GM12878 (cell line): ENCODE measurements at regions of chr7 and their contacts with region 1.

Region 1: DNA sequence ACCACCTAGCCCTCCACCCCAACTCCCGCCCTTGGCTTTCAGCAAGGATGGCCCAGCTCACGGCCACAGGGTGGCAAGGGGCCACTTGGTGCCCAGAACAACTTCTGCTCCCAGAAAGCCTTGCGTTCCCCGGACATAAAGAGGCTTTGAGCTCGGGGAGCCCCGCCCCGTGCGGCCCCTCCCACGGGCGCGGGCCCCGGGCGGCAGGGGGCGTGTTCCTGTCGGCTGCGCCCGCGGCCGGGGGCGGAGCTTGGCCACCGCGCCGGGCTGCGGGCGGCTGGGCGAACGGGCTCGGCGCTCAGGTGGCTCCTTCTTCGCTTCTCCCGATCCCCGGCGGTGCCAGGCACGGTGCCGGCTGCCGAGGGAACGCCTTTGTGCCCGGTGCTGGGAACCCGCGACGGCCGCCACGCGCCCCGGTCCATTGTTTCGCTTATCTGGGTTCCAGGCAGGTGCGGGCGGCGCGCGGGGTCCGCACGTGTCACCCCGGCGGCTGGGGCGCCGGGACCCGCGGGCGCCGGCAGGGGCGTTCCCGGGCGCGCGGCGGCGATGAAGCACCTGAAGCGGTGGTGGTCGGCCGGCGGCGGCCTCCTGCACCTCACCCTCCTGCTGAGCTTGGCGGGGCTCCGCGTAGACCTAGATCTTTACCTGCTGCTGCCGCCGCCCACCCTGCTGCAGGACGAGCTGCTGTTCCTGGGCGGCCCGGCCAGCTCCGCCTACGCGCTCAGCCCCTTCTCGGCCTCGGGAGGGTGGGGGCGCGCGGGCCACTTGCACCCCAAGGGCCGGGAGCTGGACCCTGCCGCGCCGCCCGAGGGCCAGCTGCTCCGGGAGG is at the start of gene NFE2L3:
- DNase-seq: no peak
- ATAC-seq: peak; percentile 75
- H3K4me3 ChIP-seq: peak within 1 kb of the TSS; percentile 72
- H3K27ac ChIP-seq: peak within 1 kb of the TSS; percentile 88
- H3K4me1 ChIP-seq: peaks cover 23% of the 10 kb centered on the region
- H3K27me3 ChIP-seq: no peaks in the 10 kb centered on the region
- CTCF ChIP-seq: peak; percentile 6 to 17 (median 9); a peak in 1 of 6 replicates
- EP300 ChIP-seq: no peak
- POLR2A ChIP-seq: peak; percentile 82
- RAD21 ChIP-seq: no peak
- polyA plus RNA-seq, gene NFE2L3: 4.9 to 8.9 TPM

Region 2: GRCh38 chr7:25951031-25951948 is 200.9 kb before region 1 on chr7:
- CTCF ChIA-PET with region 1: no interaction called
- POLR2A ChIA-PET with region 1: interaction called, 4 read pairs
- RAD21 ChIA-PET with region 1: no interaction called
- SMC1A ChIA-PET with region 1: no interaction called
- in situ Hi-C with region 1: no loop called
- intact Hi-C with region 1: loop called (anchors 5 kb)
- DNase-seq: peak; percentile 69
- ATAC-seq: peak; percentile 89
- H3K4me3 ChIP-seq: peak overlapping the region; percentile 86
- H3K27ac ChIP-seq: peak overlapping the region; percentile 49
- H3K4me1 ChIP-seq: peaks cover 23% of the 10 kb centered on the region
- H3K27me3 ChIP-seq: no peaks in the 10 kb centered on the region
- CTCF ChIP-seq: no peak
- EP300 ChIP-seq: no peak
- POLR2A ChIP-seq: peak; percentile 68
- RAD21 ChIP-seq: no peak

Region 3: GRCh38 chr7:25968205-25968993 is 183.8 kb before region 1 on chr7:
- CTCF ChIA-PET with region 1: interaction called, 3 read pairs
- POLR2A ChIA-PET with region 1: interaction called, 7 read pairs
- RAD21 ChIA-PET with region 1: interaction called, 8 read pairs
- SMC1A ChIA-PET with region 1: interaction called, 5 read pairs
- in situ Hi-C with region 1: no loop called
- intact Hi-C with region 1: loop called (anchors 5 kb)
- DNase-seq: peak; percentile 98
- ATAC-seq: peak; percentile 75
- H3K4me3 ChIP-seq: peak overlapping the region; percentile 31; the same call in 1 of the 2 replicates
- H3K27ac ChIP-seq: peak overlapping the region; percentile 91
- H3K4me1 ChIP-seq: peaks cover 54% of the 10 kb centered on the region
- H3K27me3 ChIP-seq: no peaks in the 10 kb centered on the region
- CTCF ChIP-seq: peak; percentile 5 to 23 (median 10); a peak in 1 of 6 replicates
- EP300 ChIP-seq: peak; percentile 94 to 95
- POLR2A ChIP-seq: peak; percentile 54; the same call in 1 of the 2 replicates
- RAD21 ChIP-seq: 0 out of 2 replicates have a peak, but pooled peaks have one; percentile 19

Region 4: DNA sequence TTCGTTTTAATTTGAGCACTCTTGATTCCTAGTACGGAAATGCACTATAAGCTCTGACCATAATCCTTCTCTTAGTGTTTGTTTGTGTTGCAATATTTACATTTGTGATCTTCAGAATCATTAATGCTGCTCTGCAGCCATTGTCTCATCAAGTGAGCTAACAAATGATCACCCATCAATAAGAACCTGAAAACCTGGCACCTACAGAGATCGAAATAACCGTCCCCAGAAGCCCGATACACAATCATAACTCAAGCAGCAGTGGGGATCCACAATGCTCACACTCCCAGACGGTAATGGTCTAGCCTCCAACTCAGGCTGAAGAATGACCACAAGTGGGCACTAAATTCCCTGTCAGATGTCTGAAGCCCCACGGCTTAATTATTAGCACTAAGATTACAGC is 156.2 kb before region 1 on chr7:
- CTCF ChIA-PET with region 1: no interaction called
- POLR2A ChIA-PET with region 1: no interaction called
- RAD21 ChIA-PET with region 1: no interaction called
- SMC1A ChIA-PET with region 1: no interaction called
- in situ Hi-C with region 1: no loop called
- intact Hi-C with region 1: no loop called
- DNase-seq: no peak
- ATAC-seq: no peak
- H3K4me3 ChIP-seq: no peak overlapping the region
- H3K27ac ChIP-seq: no peak overlapping the region
- H3K4me1 ChIP-seq: no peaks in the 10 kb centered on the region
- H3K27me3 ChIP-seq: peaks cover 0 to 1% of the 10 kb centered on the region in 2 experiments; a peak in 1 of 4 replicates
- CTCF ChIP-seq: 0 out of 6 replicates have a peak, but pooled peaks of 1 of the 3 experiments have one; percentile 2
- EP300 ChIP-seq: no peak
- POLR2A ChIP-seq: no peak
- RAD21 ChIP-seq: no peak

Region 5: GRCh38 chr7:26034391-26034790 is 117.8 kb before region 1 on chr7:
- CTCF ChIA-PET with region 1: no interaction called
- POLR2A ChIA-PET with region 1: no interaction called
- RAD21 ChIA-PET with region 1: no interaction called
- SMC1A ChIA-PET with region 1: no interaction called
- in situ Hi-C with region 1: no loop called
- intact Hi-C with region 1: no loop called
- DNase-seq: no peak
- ATAC-seq: no peak
- H3K4me3 ChIP-seq: no peak overlapping the region
- H3K27ac ChIP-seq: no peak overlapping the region
- H3K4me1 ChIP-seq: no peaks in the 10 kb centered on the region
- H3K27me3 ChIP-seq: peaks cover 0 to 4% of the 10 kb centered on the region in 2 experiments; a peak in 3 of 4 replicates
- CTCF ChIP-seq: no peak
- EP300 ChIP-seq: no peak
- POLR2A ChIP-seq: no peak
- RAD21 ChIP-seq: no peak

Region 6: DNA sequence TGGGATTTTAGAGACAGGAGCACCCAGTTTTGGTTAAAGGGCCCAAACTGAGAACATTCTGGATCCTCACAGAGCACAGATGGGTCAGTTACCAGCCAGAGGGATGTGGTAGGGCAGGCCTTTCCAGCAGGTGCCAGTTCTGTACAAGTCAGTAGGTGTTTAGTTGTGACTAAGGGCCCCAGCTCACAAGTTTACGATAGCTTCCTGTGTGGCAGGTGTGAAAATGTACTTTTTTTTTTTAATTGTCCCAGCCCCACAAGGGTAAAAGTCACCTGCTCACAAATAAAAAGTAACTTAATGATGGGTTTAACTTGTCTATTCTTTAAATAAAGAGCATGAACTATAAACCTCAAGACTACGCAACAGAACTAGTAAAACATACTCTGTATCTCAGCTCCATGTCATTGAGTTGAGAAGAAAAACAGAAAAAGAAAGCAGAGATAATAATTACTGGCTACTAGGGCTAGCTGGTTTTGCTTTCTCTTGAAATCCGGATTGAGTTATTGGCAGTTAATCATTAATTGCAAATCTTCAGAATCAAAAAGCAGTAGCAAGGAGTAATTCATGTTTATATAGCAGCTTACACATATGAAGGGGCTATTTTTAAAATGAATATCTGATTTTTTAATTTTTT is 15.3 kb after region 1 on chr7:
- CTCF ChIA-PET with region 1: interaction called, 52 read pairs
- POLR2A ChIA-PET with region 1: interaction called, 111 read pairs
- RAD21 ChIA-PET with region 1: interaction called, 74 read pairs
- SMC1A ChIA-PET with region 1: interaction called, 91 read pairs
- in situ Hi-C with region 1: no loop called
- intact Hi-C with region 1: no loop called
- DNase-seq: no peak
- ATAC-seq: peak; percentile 94
- H3K4me3 ChIP-seq: 0 out of 2 replicates have a peak overlapping the region, but pooled peaks have one; percentile 31
- H3K27ac ChIP-seq: peak overlapping the region; percentile 43
- H3K4me1 ChIP-seq: peaks cover 17% of the 10 kb centered on the region
- H3K27me3 ChIP-seq: no peaks in the 10 kb centered on the region
- CTCF ChIP-seq: no peak
- EP300 ChIP-seq: no peak
- POLR2A ChIP-seq: no peak
- RAD21 ChIP-seq: no peak

Region 7: GRCh38 chr7:26187380-26188205 is 35.4 kb after region 1 on chr7:
- CTCF ChIA-PET with region 1: interaction called, 30 read pairs
- POLR2A ChIA-PET with region 1: interaction called, 206 read pairs
- RAD21 ChIA-PET with region 1: interaction called, 164 read pairs
- SMC1A ChIA-PET with region 1: interaction called, 198 read pairs
- in situ Hi-C with region 1: no loop called
- intact Hi-C with region 1: loop called (anchors 2 kb)
- DNase-seq: no peak
- ATAC-seq: peak; percentile 23
- H3K4me3 ChIP-seq: no peak overlapping the region
- H3K27ac ChIP-seq: no peak overlapping the region
- H3K4me1 ChIP-seq: peaks cover 12% of the 10 kb centered on the region
- H3K27me3 ChIP-seq: no peaks in the 10 kb centered on the region
- CTCF ChIP-seq: no peak
- EP300 ChIP-seq: no peak
- POLR2A ChIP-seq: peak; percentile 75
- RAD21 ChIP-seq: no peak

Region 8: DNA sequence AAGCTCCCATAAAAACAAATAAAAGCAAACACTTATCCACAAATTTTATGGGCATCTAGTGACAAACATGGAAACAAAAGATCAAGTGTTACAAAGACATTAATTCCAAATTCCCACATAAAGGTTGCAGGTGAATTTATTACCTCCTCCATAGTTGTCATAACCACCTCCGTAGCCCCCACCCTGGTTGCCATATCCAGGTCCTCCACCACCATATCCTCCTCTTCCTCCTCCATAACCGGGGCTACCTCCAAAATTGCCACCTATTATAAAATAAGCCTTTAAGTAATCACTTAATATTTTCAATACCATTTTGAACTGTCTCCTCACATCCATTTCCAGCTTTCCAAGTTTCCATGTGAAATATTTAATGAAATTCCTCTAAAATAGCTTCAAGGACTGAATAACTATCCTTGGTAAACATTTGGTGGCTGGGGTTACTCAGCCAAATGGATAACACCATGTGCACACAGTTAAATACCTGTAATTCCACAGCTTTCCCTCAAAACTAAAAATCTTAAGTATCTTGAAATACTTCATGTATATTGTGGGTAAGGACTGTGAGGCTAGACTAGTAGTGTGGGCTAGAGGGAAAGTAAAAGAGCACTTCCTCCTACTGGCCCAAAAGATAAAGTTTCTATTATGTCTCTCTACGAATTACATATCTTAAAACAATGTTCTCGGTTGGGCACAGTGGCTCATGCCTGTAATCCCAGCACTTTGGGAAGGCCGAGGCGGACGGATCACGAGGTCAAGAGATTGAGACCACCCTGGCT is 41.5 kb after region 1 on chr7:
- CTCF ChIA-PET with region 1: interaction called, 104 read pairs
- POLR2A ChIA-PET with region 1: interaction called, 206 read pairs
- RAD21 ChIA-PET with region 1: interaction called, 164 read pairs
- SMC1A ChIA-PET with region 1: interaction called, 198 read pairs
- in situ Hi-C with region 1: no loop called
- intact Hi-C with region 1: loop called (anchors 2 kb)
- DNase-seq: no peak
- ATAC-seq: peak; percentile 56
- H3K4me3 ChIP-seq: peak overlapping the region; percentile 49; the same call in 1 of the 2 replicates
- H3K27ac ChIP-seq: no peak overlapping the region
- H3K4me1 ChIP-seq: peaks cover 27% of the 10 kb centered on the region
- H3K27me3 ChIP-seq: no peaks in the 10 kb centered on the region
- CTCF ChIP-seq: no peak
- EP300 ChIP-seq: no peak
- POLR2A ChIP-seq: no peak
- RAD21 ChIP-seq: no peak